Activated CD4-positive, alpha-beta T cell treated with anti-CD3 and anti-CD28 coated beads for 36 hours (primary cell): ENCODE measurements at regions of chr15 and their contacts with region 1.

Region 1: DNA sequence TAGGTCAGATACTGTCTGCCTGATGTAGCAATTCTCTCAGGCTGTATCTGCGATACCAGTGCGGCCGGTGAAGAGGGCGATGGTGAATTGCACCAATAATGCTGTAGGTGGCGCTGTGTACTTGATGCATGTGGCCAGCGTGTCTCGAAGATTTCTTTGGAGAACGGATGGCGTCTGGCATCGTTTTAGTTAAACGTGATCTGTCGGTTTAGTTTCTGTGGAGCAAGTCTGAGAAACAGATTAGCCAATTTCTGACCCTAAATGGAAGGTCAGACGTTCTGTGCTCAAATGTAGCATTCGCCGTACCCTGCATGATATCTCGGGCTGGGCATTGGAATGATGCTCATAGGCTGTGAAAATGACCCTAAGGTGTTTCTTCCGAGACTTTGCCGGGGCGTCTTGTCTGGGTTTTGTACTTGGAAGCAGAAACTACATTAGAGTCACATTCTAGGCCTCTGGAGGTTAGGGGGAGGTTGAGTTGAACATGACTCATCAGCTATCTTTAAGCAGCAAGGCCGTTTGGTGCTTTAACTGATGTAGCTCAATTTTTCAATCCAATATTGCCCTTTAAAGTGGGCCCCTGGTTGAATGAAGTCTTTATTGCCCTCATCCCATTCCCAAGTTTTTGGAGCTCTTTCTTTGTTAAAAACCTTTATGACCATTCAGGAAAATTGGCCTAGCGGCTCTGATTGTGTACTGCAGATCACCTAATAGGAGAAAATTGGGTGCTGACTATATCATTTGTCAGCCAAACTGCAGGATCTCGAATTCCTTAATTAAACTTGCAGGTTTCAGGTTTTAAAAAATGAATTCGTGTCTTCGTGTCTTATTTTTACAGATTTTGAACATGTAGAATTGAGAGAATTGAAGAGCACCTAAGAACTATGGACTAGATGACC is 80.0 kb downstream of the SQOR start:
- DNase-seq: peak; percentile 75
- ATAC-seq: peak; percentile 64
- H3K4me3 Mint-ChIP-seq: no peak overlapping the region
- H3K27ac Mint-ChIP-seq: no peak overlapping the region
- H3K4me1 Mint-ChIP-seq: no peaks in the 10 kb centered on the region
- H3K27me3 Mint-ChIP-seq: peaks cover 21% of the 10 kb centered on the region

Region 2: DNA sequence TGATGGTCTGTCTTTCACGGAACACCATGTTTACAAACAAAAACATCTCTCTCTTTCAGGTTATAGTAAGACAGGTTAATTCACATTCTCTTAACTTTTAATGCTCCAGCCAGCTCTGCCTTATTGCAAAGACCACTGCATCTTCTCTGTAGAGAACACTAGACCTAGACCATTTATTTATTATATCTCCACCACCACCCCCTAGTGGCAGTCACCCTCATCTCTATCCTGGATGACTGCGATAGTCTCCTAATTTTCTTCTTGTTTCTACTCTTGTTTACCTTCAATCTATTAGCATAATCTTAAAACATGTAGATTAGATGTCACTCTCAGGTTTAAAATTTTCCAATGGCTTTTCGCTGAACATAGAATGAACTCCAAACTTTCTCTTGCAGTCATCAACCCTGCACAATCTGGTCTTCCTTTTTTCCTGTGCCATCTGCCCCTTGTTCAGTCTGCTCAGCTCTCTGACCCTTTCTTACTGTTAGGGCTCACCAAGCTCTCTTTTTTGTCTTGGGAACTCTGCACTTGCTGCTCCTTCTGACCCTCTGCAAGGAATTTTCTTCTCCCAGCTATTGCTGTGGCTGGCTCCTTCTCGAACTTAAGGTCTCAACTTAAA is 75.6 kb after region 1 on chr15:
- CTCF ChIA-PET with region 1: interaction called, 3 read pairs
- POLR2A ChIA-PET with region 1: no interaction called
- intact Hi-C with region 1: loop called in 1 of 2 experiments (anchors 1 kb)
- DNase-seq: peak; percentile 49
- ATAC-seq: no peak
- H3K4me3 Mint-ChIP-seq: no peak overlapping the region
- H3K27ac Mint-ChIP-seq: no peak overlapping the region
- H3K4me1 Mint-ChIP-seq: no peaks in the 10 kb centered on the region
- H3K27me3 Mint-ChIP-seq: peaks cover 19% of the 10 kb centered on the region

Region 3: GRCh38 chr15:46312133-46312740 is 597.4 kb after region 1 on chr15:
- CTCF ChIA-PET with region 1: no interaction called
- POLR2A ChIA-PET with region 1: no interaction called
- intact Hi-C with region 1: loop called in 1 of 2 experiments (anchors 5 kb)
- DNase-seq: peak; percentile 77
- ATAC-seq: peak; percentile 73
- H3K4me3 Mint-ChIP-seq: no peak overlapping the region
- H3K27ac Mint-ChIP-seq: no peak overlapping the region
- H3K4me1 Mint-ChIP-seq: no peaks in the 10 kb centered on the region
- H3K27me3 Mint-ChIP-seq: no peaks in the 10 kb centered on the region